Esophagus squamous epithelium (tissue), 5 donors: ENCODE measurements at regions of chr3 and their contacts with region 1.

Region 1: GRCh38 chr3:118884748-118885206 is 149.9 kb downstream of the IGSF11 start:
- DNase-seq: no peak
- H3K4me3 ChIP-seq: no peak overlapping the region
- H3K27ac ChIP-seq: no peak overlapping the region
- H3K4me1 ChIP-seq: peaks cover 0 to 4% (median 0%) of the 10 kb centered on the region in 3 donors
- H3K27me3 ChIP-seq: peaks cover 0 to 25% (median 0%) of the 10 kb centered on the region in 4 donors
- CTCF ChIP-seq: peak; percentile 36 to 82 (median 77)
- POLR2A ChIP-seq: no peak

Region 2: GRCh38 chr3:119034256-119035013 is 149.7 kb after region 1 on chr3 and contains the start of gene IGSF11:
- intact Hi-C with region 1: loop called (anchors 5 kb)
- DNase-seq: no peak
- H3K4me3 ChIP-seq: peak within 1 kb of the TSS; percentile 41 to 72 (median 63)
- H3K27ac ChIP-seq: peak within 1 kb of the TSS in 2 of 4 donors; percentile 57 to 65
- H3K4me1 ChIP-seq: peaks cover 6 to 17% (median 7%) of the 10 kb centered on the region in 3 donors
- H3K27me3 ChIP-seq: peaks cover 0 to 72% (median 0%) of the 10 kb centered on the region in 4 donors
- CTCF ChIP-seq: peak in 5 of 6 experiments; percentile 41 to 70 (median 57)
- POLR2A ChIP-seq: no peak
- total RNA-seq, gene IGSF11: 0.09 to 8.8 (median 0.47) TPM

Region 3: DNA sequence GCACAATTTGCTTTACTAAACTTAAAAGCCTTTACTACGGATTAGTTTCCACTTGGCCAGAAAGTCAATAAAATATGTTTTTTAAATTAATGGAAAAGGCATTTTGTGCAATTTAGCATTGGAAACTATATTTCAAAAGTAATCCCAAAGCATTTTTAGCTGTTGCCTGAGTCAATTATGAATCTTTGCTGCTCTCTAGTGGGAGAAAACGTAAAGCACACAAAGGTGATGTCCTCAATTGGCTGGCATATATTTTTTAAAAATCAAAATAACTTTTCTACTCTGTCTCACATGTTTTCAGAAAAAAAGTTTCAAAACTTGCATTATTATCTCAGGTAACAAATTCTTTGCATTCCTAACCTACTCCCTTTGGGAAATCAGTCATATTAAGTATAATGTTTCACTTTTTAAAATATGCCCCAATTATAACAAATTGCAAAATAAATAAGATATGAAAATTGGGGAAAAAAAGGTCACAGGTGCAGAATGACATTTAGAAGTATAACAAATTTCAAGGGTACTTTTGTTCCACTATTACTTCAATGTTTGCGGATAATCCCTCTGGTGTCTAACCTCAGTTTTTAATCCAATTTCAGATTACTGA is 213.9 kb after region 1 on chr3:
- intact Hi-C with region 1: loop called (anchors 2 kb)
- DNase-seq: no peak
- H3K4me3 ChIP-seq: no peak overlapping the region
- H3K27ac ChIP-seq: no peak overlapping the region
- H3K4me1 ChIP-seq: no peaks in the 10 kb centered on the region
- H3K27me3 ChIP-seq: no peaks in the 10 kb centered on the region
- CTCF ChIP-seq: peak; percentile 32 to 77 (median 56)
- POLR2A ChIP-seq: no peak

Region 4: DNA sequence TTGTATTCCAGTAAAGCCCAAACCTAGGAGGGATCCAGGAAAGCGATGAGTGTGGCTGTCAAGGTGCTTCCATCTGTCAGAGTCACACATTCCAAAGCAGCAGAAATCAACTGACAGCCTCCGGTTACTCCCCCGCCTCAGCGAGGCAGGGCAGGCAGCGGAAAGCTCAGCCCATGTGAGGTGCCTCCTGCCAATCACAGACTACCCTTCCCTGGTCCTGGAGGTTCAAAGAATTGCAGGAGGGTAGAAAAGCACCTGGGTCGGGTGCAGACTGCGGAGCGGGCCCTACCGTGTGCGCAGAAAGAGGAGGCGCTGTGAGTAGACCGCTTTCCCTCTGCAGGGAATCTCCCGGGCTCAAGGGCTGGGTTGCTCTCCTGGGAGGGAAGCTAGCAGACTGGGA is 288.5 kb after region 1 on chr3 and contains the start of gene UPK1B:
- intact Hi-C with region 1: no loop called
- DNase-seq: no peak
- H3K4me3 ChIP-seq: no peak within 1 kb of the TSS
- H3K27ac ChIP-seq: no peak within 1 kb of the TSS
- H3K4me1 ChIP-seq: peaks cover 0 to 18% (median 0%) of the 10 kb centered on the region in 3 donors
- H3K27me3 ChIP-seq: no peaks in the 10 kb centered on the region
- CTCF ChIP-seq: no peak
- POLR2A ChIP-seq: no peak
- total RNA-seq, gene UPK1B: 0.26 to 5.9 (median 2.6) TPM